ENCODE measurements at regions of chr2 and their contacts with region 1.

Region 1: GRCh38 chr2:16727256-16727655 is 61.6 kb upstream of the CYRIA start:
- DNase-seq: no peak
- ATAC-seq: no peak
- H3K4me3 ChIP-seq: no peak overlapping the region
- H3K4me3 Mint-ChIP-seq: no peak overlapping the region
- H3K27ac ChIP-seq: no peak overlapping the region
- H3K27ac Mint-ChIP-seq: no peak overlapping the region
- H3K4me1 ChIP-seq: peaks cover 12 to 20% of the 10 kb centered on the region in 2 donors
- H3K4me1 Mint-ChIP-seq: peaks cover 42% of the 10 kb centered on the region
- H3K27me3 ChIP-seq: no peaks in the 10 kb centered on the region
- H3K27me3 Mint-ChIP-seq: no peaks in the 10 kb centered on the region
- CTCF ChIP-seq: no peak

Region 2: DNA sequence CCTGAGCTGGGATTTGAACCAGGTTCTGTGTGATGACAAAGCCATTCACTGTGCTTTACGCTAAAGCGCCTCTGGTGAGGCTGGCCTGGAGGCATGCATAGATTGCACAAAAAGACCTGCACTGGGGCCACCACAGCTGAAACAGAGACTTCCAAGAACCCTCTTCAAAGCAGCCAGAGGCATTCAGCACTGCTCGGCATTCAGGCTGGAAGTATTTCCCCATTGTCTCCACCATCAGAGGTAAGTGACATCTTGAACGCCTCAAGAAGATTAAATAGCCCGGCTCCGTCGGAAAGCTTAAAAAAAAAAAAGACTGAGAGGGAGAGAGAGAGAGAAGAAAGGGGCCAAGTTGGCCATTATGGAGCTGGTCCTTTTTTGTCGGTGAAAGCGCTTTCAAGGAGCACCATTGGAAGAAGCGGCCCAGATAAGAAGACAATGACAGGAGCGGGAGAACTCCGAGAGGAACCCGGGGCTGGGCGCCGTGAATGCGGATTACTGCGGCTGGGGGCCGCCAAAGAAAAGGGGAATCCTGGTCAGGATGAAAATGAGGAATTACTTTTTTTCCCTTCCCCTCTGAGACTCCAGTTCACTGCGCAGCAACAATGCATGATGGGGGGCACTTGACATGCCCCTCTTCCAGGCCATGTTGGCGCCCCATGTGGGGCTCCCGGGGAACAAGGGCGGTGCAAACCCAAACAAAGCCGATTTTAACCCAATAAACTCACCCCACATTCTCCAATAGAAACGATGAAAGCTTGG is 558.6 kb before region 1 on chr2:
- CTCF ChIA-PET with region 1: no interaction called
- POLR2A ChIA-PET with region 1: no interaction called
- intact Hi-C with region 1: no loop called
- DNase-seq: no peak
- ATAC-seq: no peak
- H3K4me3 ChIP-seq: no peak overlapping the region
- H3K4me3 Mint-ChIP-seq: no peak overlapping the region
- H3K27ac ChIP-seq: no peak overlapping the region
- H3K27ac Mint-ChIP-seq: no peak overlapping the region
- H3K4me1 ChIP-seq: no peaks in the 10 kb centered on the region
- H3K4me1 Mint-ChIP-seq: no peaks in the 10 kb centered on the region
- H3K27me3 ChIP-seq: no peaks in the 10 kb centered on the region
- H3K27me3 Mint-ChIP-seq: no peaks in the 10 kb centered on the region
- CTCF ChIP-seq: no peak

Region 3: DNA sequence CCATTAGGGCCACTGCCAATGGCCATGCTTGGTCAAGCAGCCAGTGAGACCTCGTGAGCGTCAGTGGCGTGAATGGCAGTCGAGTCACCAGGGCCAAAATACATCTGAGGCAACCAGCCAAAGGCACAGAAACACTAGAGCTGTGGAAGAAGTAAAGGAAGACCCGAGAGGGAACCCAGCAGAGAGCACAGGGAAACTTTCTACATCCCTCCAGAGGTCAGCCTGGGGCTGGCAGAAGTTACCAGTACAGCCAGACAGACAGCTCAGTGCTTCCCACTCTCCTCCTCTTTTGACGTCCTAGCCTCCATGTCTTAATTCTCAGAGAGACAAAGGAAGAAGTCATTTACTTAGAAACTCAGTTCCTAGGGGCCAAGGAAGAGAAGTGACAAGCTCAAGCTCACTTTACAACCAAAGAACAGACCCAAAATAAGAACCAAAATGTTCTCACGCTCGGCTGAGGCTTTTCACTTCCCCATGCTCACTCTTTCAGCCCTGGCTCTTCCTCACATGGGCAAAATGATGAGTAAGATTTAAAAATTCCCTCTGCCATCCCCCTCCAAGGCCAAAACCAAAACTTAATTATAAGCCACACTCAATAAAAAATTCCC is 70.4 kb before region 1 on chr2:
- CTCF ChIA-PET with region 1: no interaction called
- POLR2A ChIA-PET with region 1: no interaction called
- intact Hi-C with region 1: loop called (anchors 5 kb)
- DNase-seq: peak; percentile 82
- ATAC-seq: peak; percentile 65
- H3K4me3 ChIP-seq: peak overlapping the region in 3 of 5 experiments; percentile 16 to 43 (median 33)
- H3K4me3 Mint-ChIP-seq: peak overlapping the region; percentile 84
- H3K27ac ChIP-seq: peak overlapping the region; percentile 66 to 82
- H3K27ac Mint-ChIP-seq: peak overlapping the region; percentile 86
- H3K4me1 ChIP-seq: peaks cover 96 to 99% of the 10 kb centered on the region in 2 donors
- H3K4me1 Mint-ChIP-seq: peaks cover 98% of the 10 kb centered on the region
- H3K27me3 ChIP-seq: no peaks in the 10 kb centered on the region
- H3K27me3 Mint-ChIP-seq: no peaks in the 10 kb centered on the region
- CTCF ChIP-seq: no peak

Region 4: GRCh38 chr2:17043173-17043572 is 315.9 kb after region 1 on chr2:
- CTCF ChIA-PET with region 1: no interaction called
- POLR2A ChIA-PET with region 1: no interaction called
- intact Hi-C with region 1: no loop called
- DNase-seq: no peak
- ATAC-seq: no peak
- H3K4me3 ChIP-seq: no peak overlapping the region
- H3K4me3 Mint-ChIP-seq: no peak overlapping the region
- H3K27ac ChIP-seq: no peak overlapping the region
- H3K27ac Mint-ChIP-seq: no peak overlapping the region
- H3K4me1 ChIP-seq: no peaks in the 10 kb centered on the region
- H3K4me1 Mint-ChIP-seq: no peaks in the 10 kb centered on the region
- H3K27me3 ChIP-seq: no peaks in the 10 kb centered on the region
- H3K27me3 Mint-ChIP-seq: no peaks in the 10 kb centered on the region
- CTCF ChIP-seq: no peak

Measured in B cell (primary cell).